Activated CD8-positive, alpha-beta T cell treated with anti-CD3 and anti-CD28 coated beads for 36 hours (primary cell): ENCODE measurements at regions of chr4 and their contacts with region 1.

Region 1: GRCh38 chr4:10204401-10205058 is 87.9 kb upstream of the WDR1 start:
- DNase-seq: no peak
- ATAC-seq: no peak
- H3K4me3 Mint-ChIP-seq: no peak overlapping the region
- H3K27ac Mint-ChIP-seq: no peak overlapping the region
- H3K4me1 Mint-ChIP-seq: no peaks in the 10 kb centered on the region
- H3K27me3 Mint-ChIP-seq: peaks cover 4% of the 10 kb centered on the region
- CTCF ChIP-seq: no peak

Region 2: DNA sequence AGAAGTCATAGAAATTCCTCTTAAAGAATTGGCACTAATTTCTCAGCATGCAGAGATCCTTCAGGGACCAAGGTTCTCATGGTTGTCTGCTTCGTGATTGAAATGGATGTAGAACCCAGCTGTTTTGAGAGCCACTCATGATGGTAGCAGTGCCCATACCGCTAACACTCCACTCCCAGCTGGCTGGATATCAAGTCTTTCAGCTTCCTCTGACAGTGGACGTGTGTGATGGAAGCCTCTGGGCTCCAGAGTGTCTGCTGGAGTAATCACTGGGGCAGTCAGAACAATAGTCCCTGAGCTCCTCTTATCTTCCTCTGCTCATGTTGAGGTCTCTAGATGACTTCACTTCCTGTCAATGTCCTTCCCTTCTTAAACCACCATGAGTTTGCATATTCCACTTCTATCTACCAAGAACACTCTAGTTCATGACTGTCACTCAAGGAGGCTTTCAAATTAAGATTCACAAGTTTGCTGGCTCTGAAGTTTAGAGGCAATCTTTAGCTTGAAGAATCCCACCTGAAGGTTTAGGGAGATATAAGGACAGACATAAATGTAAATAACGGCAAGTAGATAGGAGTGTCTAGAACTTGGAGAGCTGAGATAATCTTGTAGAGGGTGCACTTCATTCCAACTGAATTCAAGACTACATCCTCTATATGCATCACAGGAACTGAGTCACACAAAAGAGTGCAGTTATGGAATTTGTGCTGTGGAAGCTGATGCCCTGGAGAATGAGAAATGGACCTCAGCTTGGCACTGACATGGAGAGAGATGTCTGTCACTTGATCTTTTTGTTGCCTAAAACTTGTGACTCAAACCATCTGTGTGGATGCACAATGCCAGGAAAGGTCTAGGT is 23.4 kb before region 1 on chr4:
- CTCF ChIA-PET with region 1: no interaction called
- POLR2A ChIA-PET with region 1: no interaction called
- intact Hi-C with region 1: no loop called
- DNase-seq: peak; percentile 61
- ATAC-seq: peak; percentile 94
- H3K4me3 Mint-ChIP-seq: peak overlapping the region; percentile 16
- H3K27ac Mint-ChIP-seq: peak overlapping the region; percentile 93
- H3K4me1 Mint-ChIP-seq: peaks cover 32% of the 10 kb centered on the region
- H3K27me3 Mint-ChIP-seq: no peaks in the 10 kb centered on the region
- CTCF ChIP-seq: no peak

Region 3: GRCh38 chr4:10225096-10225495 is 20.6 kb after region 1 on chr4:
- CTCF ChIA-PET with region 1: no interaction called
- POLR2A ChIA-PET with region 1: no interaction called
- intact Hi-C with region 1: no loop called
- DNase-seq: no peak
- ATAC-seq: no peak
- H3K4me3 Mint-ChIP-seq: no peak overlapping the region
- H3K27ac Mint-ChIP-seq: no peak overlapping the region
- H3K4me1 Mint-ChIP-seq: peaks cover 3% of the 10 kb centered on the region
- H3K27me3 Mint-ChIP-seq: no peaks in the 10 kb centered on the region
- CTCF ChIP-seq: no peak

Region 4: DNA sequence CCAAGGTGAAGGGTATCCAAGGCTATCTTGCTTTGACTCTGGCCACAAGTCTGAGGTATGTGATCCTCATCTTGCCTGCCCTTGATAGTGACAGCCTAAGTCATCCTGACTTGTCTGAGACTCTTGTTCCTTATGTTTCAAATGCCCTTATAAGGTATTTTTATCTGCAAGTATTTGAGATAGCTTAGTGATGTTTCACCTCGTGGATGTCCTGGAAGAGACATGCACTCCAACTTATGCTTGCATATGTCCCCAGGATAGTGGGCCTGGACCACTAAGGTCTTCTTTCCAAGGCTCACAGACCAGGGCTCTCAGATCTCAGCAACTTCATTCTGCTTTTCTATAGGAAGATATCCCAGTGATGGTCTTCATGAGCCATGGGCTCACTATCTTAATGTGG is 32.6 kb after region 1 on chr4:
- CTCF ChIA-PET with region 1: no interaction called
- POLR2A ChIA-PET with region 1: no interaction called
- intact Hi-C with region 1: loop called (anchors 1 kb)
- DNase-seq: no peak
- ATAC-seq: no peak
- H3K4me3 Mint-ChIP-seq: no peak overlapping the region
- H3K27ac Mint-ChIP-seq: no peak overlapping the region
- H3K4me1 Mint-ChIP-seq: no peaks in the 10 kb centered on the region
- H3K27me3 Mint-ChIP-seq: no peaks in the 10 kb centered on the region
- CTCF ChIP-seq: no peak